GM12878 (cell line): ENCODE measurements at regions of chr3 and their contacts with region 1.

Region 1: DNA sequence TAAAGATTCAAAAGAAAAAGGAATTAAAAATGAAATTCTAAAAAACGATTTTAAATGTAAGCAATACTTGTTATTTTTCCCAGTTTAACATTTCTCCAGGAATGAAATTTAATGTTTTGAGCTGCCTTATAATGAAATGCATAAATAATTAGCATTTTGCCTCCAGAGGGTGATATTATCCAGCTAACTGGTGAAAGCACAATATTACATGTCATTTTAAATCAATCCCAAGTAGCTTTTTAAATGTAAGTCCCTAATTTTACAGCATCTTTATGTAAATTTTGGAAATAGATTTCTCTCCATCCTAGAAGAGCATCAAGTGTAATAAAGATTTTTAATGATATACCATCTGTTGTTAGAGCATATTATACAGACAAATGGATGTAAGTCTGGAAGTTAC is 139.1 kb upstream of the P2RY1 start:
- DNase-seq: no peak
- ATAC-seq: no peak
- H3K4me3 ChIP-seq: no peak overlapping the region
- H3K27ac ChIP-seq: no peak overlapping the region
- H3K4me1 ChIP-seq: no peaks in the 10 kb centered on the region
- H3K27me3 ChIP-seq: no peaks in the 10 kb centered on the region
- CTCF ChIP-seq: peak in 1 of 3 experiments; percentile 12; a peak in 1 of 6 replicates
- EP300 ChIP-seq: no peak
- POLR2A ChIP-seq: no peak
- RAD21 ChIP-seq: peak; percentile 52

Region 2: GRCh38 chr3:152737021-152737908 is 41.4 kb after region 1 on chr3:
- CTCF ChIA-PET with region 1: no interaction called
- POLR2A ChIA-PET with region 1: no interaction called
- RAD21 ChIA-PET with region 1: no interaction called
- SMC1A ChIA-PET with region 1: no interaction called
- in situ Hi-C with region 1: no loop called
- intact Hi-C with region 1: no loop called
- DNase-seq: peak; percentile 96
- ATAC-seq: peak; percentile 99
- H3K4me3 ChIP-seq: no peak overlapping the region
- H3K27ac ChIP-seq: peak overlapping the region; percentile 45; the same call in 1 of the 2 replicates
- H3K4me1 ChIP-seq: peaks cover 20% of the 10 kb centered on the region
- H3K27me3 ChIP-seq: no peaks in the 10 kb centered on the region
- CTCF ChIP-seq: no peak
- EP300 ChIP-seq: peak; percentile 84 to 89
- POLR2A ChIP-seq: no peak
- RAD21 ChIP-seq: 0 out of 2 replicates have a peak, but pooled peaks have one; percentile 1

Region 3: DNA sequence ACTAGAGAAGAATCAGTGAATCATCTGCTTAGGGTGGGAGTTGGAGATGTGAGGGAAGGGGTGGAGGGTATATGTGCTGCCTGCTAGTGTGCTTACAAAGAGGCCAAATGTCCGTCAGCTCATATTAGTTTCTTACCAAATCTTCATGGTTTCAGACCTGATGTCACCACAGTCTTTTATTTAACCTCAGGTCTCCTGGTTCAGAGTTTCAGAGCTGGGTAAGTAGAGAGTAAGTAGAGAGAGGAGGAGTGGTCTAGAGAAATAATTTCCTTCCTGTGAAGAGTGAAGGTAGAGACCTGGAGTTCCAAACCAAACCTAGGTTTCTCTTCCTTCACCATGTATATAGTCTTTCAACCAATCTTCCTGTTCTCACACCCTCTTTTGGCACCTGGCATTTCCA is 121.6 kb after region 1 on chr3:
- CTCF ChIA-PET with region 1: no interaction called
- POLR2A ChIA-PET with region 1: no interaction called
- RAD21 ChIA-PET with region 1: no interaction called
- SMC1A ChIA-PET with region 1: no interaction called
- in situ Hi-C with region 1: no loop called
- intact Hi-C with region 1: no loop called
- DNase-seq: no peak
- ATAC-seq: no peak
- H3K4me3 ChIP-seq: no peak overlapping the region
- H3K27ac ChIP-seq: no peak overlapping the region
- H3K4me1 ChIP-seq: 0 out of 2 replicates have a peak, but pooled peaks cover 3% of the 10 kb centered on the region
- H3K27me3 ChIP-seq: no peaks in the 10 kb centered on the region
- CTCF ChIP-seq: no peak
- EP300 ChIP-seq: no peak
- POLR2A ChIP-seq: no peak
- RAD21 ChIP-seq: no peak

Region 4: GRCh38 chr3:152961323-152961722 is 265.5 kb after region 1 on chr3:
- CTCF ChIA-PET with region 1: no interaction called
- POLR2A ChIA-PET with region 1: no interaction called
- RAD21 ChIA-PET with region 1: no interaction called
- SMC1A ChIA-PET with region 1: interaction called, 5 read pairs
- in situ Hi-C with region 1: no loop called
- intact Hi-C with region 1: loop called (anchors 10 kb)
- DNase-seq: peak; percentile 5
- ATAC-seq: peak; percentile 67
- H3K4me3 ChIP-seq: no peak overlapping the region
- H3K27ac ChIP-seq: no peak overlapping the region
- H3K4me1 ChIP-seq: no peaks in the 10 kb centered on the region
- H3K27me3 ChIP-seq: no peaks in the 10 kb centered on the region
- CTCF ChIP-seq: peak; percentile 16 to 36 (median 34); a peak in 4 of 6 replicates
- EP300 ChIP-seq: no peak
- POLR2A ChIP-seq: no peak
- RAD21 ChIP-seq: peak; percentile 71